MCF 10A (cell line): ENCODE measurements at regions of chr19 and their contacts with region 1.

Region 1: DNA sequence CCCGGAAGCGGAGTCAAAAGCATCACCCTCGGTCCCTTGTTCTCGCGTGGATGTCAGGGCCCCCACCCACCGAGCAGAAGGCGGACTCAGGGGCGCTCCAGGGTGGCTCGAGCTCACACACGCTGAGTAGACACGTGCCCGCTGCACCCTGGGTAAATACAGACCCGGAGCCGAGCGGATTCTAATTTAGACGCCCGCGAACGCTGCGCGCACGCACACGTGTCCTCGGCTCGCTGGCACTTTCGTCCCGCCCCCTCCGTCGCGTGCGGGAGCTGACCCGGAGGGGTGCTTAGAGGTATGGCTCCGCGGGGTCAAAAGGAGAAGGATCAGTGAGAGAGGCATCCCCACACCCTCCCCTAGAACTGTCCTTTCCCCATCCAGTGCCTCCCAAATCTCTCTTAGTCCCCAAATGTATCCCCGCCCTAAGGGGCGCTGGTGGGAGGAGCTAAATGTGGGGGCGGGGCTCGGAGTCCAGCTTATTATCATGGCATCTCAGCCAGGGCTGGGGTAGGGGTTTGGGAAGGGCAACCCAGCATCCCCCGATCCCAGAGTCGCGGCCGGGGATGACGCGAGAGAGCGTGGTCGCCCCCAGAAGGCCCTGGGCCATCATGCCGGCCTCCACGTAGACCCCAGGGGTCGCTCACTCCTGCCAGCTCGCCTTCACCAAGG is 451 bp upstream of the ICAM5 start:
- DNase-seq: peak; percentile 79
- H3K4me3 Mint-ChIP-seq: peak overlapping the region; percentile 79
- H3K27ac Mint-ChIP-seq: peak overlapping the region; percentile 83
- H3K4me1 Mint-ChIP-seq: peaks cover 30% of the 10 kb centered on the region
- H3K27me3 Mint-ChIP-seq: no peaks in the 10 kb centered on the region
- CTCF ChIP-seq: no peak

Region 2: GRCh38 chr19:10380313-10381102 is 91.2 kb after region 1 on chr19 and contains the start of gene TYK2:
- CTCF ChIA-PET with region 1: interaction called, 3 read pairs
- POLR2A ChIA-PET with region 1: interaction called, 5 read pairs
- intact Hi-C with region 1: loop called (anchors 1 kb)
- DNase-seq: peak; percentile 100
- H3K4me3 Mint-ChIP-seq: peak within 1 kb of the TSS; percentile 89
- H3K27ac Mint-ChIP-seq: peak within 1 kb of the TSS; percentile 80
- H3K4me1 Mint-ChIP-seq: peaks cover 6% of the 10 kb centered on the region
- H3K27me3 Mint-ChIP-seq: no peaks in the 10 kb centered on the region
- CTCF ChIP-seq: no peak
- total RNA-seq, gene TYK2: 75.0 and 83.7 TPM in 2 replicates